SK-N-SH (cell line): ENCODE measurements at regions of chr2 and their contacts with region 1.

Region 1: DNA sequence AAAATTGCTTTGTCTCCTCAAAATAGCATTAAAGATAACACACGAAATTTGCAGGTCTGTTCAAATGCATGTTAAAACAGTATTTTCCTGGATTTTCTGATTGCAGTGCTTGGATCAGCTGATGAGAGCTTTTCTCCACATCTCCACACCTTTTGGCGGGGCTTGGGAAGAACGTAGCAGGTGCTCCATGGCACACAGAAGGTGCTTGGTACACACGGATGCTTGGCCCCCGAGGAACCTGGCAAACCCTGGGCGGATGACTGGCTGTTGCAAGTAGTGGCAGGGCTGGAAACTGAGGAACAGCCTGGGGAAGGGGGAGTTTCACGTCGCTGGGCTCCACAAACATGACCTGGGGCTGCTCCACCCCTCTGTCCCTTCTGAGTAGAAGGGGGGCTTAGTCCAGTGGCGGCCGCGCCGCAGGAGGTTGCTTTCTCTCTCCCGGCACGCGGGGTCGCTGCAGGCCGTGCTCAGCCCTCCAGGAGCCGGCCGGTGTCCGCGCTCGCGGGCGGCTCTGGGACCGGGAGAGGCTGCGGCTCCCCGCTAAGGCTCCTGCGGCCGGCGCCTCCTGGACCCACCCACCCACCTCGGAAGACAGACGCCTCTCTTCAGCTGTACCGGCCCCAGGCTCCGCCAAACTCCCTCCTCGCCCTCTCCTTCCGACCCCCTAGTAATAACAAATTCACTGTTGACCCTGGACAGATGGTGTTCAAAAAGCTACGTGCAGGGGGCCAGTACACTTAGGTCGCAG is 69.3 kb downstream of the MARCO start:
- DNase-seq: peak; percentile 92
- H3K4me3 ChIP-seq: peak overlapping the region in 1 of 2 experiments; percentile 26; a peak in 2 of 4 replicates
- H3K27ac ChIP-seq: no peak overlapping the region
- H3K4me1 ChIP-seq: peaks cover 0 to 2% of the 10 kb centered on the region in 2 experiments; a peak in 1 of 4 replicates
- H3K27me3 ChIP-seq: peaks cover 22% of the 10 kb centered on the region
- CTCF ChIP-seq: peak; percentile 56
- EP300 ChIP-seq: no peak
- RAD21 ChIP-seq: peak; percentile 81

Region 2: GRCh38 chr2:119028327-119029174 is 17.2 kb after region 1 on chr2:
- CTCF ChIA-PET with region 1: interaction called, 65 read pairs
- POLR2A ChIA-PET with region 1: no interaction called
- DNase-seq: peak; percentile 39
- H3K4me3 ChIP-seq: no peak overlapping the region
- H3K27ac ChIP-seq: no peak overlapping the region
- H3K4me1 ChIP-seq: peaks cover 0 to 12% of the 10 kb centered on the region in 2 experiments; a peak in 2 of 4 replicates
- H3K27me3 ChIP-seq: no peaks in the 10 kb centered on the region
- CTCF ChIP-seq: peak; percentile 47
- EP300 ChIP-seq: no peak
- RAD21 ChIP-seq: peak; percentile 51

Region 3: GRCh38 chr2:119264781-119265692 is 253.7 kb after region 1 on chr2:
- CTCF ChIA-PET with region 1: interaction called, 17 read pairs
- POLR2A ChIA-PET with region 1: no interaction called
- DNase-seq: peak; percentile 75
- H3K4me3 ChIP-seq: no peak overlapping the region; a peak in 1 of 4 replicates
- H3K27ac ChIP-seq: no peak overlapping the region
- H3K4me1 ChIP-seq: no peaks in the 10 kb centered on the region
- H3K27me3 ChIP-seq: no peaks in the 10 kb centered on the region
- CTCF ChIP-seq: peak; percentile 78
- EP300 ChIP-seq: no peak
- RAD21 ChIP-seq: peak; percentile 83

Region 4: GRCh38 chr2:119290859-119291587 is 279.7 kb after region 1 on chr2:
- CTCF ChIA-PET with region 1: interaction called, 32 read pairs
- POLR2A ChIA-PET with region 1: no interaction called
- DNase-seq: peak; percentile 63
- H3K4me3 ChIP-seq: peak overlapping the region in 1 of 2 experiments; percentile 26; a peak in 1 of 4 replicates
- H3K27ac ChIP-seq: no peak overlapping the region
- H3K4me1 ChIP-seq: no peaks in the 10 kb centered on the region
- H3K27me3 ChIP-seq: no peaks in the 10 kb centered on the region
- CTCF ChIP-seq: peak; percentile 59
- EP300 ChIP-seq: no peak
- RAD21 ChIP-seq: peak; percentile 72

Region 5: DNA sequence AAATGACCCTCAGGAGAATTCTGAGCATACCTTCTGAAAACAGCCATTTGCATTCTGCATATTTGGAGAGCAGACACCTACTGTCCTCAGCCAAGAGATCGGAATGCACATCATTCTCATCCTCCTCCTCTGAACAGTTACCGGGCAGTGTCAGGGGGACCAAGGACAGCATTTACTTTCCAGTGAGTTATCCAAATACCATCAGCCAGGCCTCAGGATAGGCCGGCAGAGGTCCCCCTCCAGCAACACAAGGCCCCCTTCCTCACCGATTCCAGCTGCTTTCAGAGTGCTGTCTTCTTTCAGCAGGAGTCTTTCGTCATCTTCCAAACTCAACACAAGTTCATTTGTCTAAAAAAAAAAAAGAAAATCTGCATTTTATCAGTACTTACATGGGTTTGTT is 300.0 kb after region 1 on chr2:
- CTCF ChIA-PET with region 1: interaction called, 30 read pairs
- POLR2A ChIA-PET with region 1: no interaction called
- DNase-seq: no peak
- H3K4me3 ChIP-seq: no peak overlapping the region
- H3K27ac ChIP-seq: no peak overlapping the region
- H3K4me1 ChIP-seq: peaks cover 0 to 2% of the 10 kb centered on the region in 2 experiments; a peak in 1 of 4 replicates
- H3K27me3 ChIP-seq: no peaks in the 10 kb centered on the region
- CTCF ChIP-seq: no peak
- EP300 ChIP-seq: no peak
- RAD21 ChIP-seq: no peak